ENCODE measurements at regions of chr1 and their contacts with region 1.

Region 1: DNA sequence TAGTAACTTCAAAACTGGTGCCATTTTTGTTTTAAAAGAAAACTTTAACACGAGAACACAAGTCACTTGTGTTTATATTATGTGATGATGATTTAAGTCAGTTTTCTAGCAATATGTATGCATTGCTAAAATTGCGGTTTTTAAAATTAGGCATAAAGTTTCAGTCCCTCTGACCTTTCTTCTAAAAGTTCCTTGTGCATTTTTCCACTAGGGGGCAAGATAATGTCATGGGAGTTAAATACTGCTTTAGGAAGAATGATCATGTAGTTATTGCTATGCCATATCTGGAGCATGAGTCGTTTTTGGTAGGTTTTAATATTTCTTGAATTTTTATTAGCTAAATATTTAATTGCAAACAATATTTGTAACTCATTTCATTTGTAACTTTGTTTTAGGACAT is 10.7 kb downstream of the CDC7 start:
- DNase-seq: no peak
- H3K4me3 ChIP-seq: no peak overlapping the region
- CTCF ChIP-seq: no peak
- POLR2A ChIP-seq: no peak

Region 2: GRCh38 chr1:90800012-90800717 is 711.2 kb before region 1 on chr1:
- intact Hi-C with region 1: no loop called
- DNase-seq: no peak
- H3K4me3 ChIP-seq: no peak overlapping the region
- CTCF ChIP-seq: no peak
- POLR2A ChIP-seq: no peak

Region 3: DNA sequence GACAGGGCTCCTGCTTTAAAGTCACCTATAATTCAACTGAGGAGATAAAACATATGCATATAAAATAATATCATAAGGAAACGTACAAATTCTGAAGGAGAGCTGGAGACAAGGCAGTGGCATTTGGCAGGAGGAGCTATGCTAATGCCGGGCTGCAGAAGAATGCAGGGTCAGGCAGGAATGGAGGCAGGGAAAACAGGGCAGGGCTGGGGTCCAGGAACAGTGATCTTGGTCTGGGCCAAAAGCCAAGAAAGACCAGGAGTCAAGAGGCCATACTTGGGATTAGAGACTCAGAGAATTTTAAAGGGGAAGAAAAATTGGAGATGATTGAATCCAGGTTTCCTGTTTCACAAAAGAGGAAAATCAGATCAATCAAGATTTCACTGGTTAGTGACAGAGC is 417.9 kb after region 1 on chr1:
- intact Hi-C with region 1: loop called (anchors 5 kb)
- DNase-seq: peak in 1 of 2 donors; percentile 75
- H3K4me3 ChIP-seq: no peak overlapping the region
- CTCF ChIP-seq: no peak
- POLR2A ChIP-seq: no peak